CD8-positive, alpha-beta memory T cell (primary cell): ENCODE measurements at regions of chr6 and their contacts with region 1.

Region 1: DNA sequence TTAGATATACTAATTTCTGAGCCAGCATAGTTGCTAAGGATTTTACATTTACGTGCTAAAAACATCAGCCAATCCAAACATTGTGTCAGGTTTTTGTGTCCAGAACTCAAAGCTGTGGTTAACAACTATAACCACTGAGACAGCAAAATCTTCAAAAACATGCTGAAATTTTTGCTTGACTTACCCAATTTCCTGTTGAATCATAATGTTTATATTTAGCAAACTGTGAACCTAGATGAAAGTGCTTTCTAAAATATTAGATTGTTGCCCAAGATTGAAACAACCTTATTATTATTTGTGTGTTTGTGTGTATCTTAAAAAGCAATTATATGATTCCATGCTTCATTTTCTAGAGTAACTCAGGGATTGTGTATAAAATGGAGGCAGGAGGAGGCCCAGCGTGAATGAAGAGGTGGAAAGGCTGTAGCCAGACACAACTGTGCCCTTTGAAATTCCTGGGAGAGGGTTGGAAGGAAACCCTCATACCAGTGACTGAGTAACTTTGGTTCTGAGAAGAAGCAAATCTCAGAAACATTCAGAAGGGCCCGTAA is 48.0 kb downstream of the ARMC2 start:
- DNase-seq: peak in 1 of 5 donors; percentile 71
- H3K4me3 ChIP-seq: peak overlapping the region; percentile 20
- H3K4me3 Mint-ChIP-seq: peak overlapping the region; percentile 25 to 88 (median 83)
- H3K27ac ChIP-seq: peak overlapping the region; percentile 33
- H3K27ac Mint-ChIP-seq: peak overlapping the region; percentile 74 to 99 (median 93)
- H3K4me1 ChIP-seq: peaks cover 41% of the 10 kb centered on the region
- H3K4me1 Mint-ChIP-seq: peaks cover 45 to 71% (median 68%) of the 10 kb centered on the region in 3 donors
- H3K27me3 ChIP-seq: no peaks in the 10 kb centered on the region
- H3K27me3 Mint-ChIP-seq: no peaks in the 10 kb centered on the region

Region 2: GRCh38 chr6:108541838-108542759 is 354.1 kb before region 1 on chr6:
- CTCF ChIA-PET with region 1: interaction called, 20 read pairs
- POLR2A ChIA-PET with region 1: interaction called, 5 read pairs
- DNase-seq: peak; percentile 54 to 80 (median 65)
- H3K4me3 ChIP-seq: no peak overlapping the region
- H3K4me3 Mint-ChIP-seq: peak overlapping the region in 3 of 7 donors; percentile 8 to 32 (median 28)
- H3K27ac ChIP-seq: no peak overlapping the region
- H3K27ac Mint-ChIP-seq: peak overlapping the region in 3 of 8 donors; percentile 24 to 84 (median 33)
- H3K4me1 ChIP-seq: peaks cover 19% of the 10 kb centered on the region
- H3K4me1 Mint-ChIP-seq: peaks cover 20 to 26% (median 22%) of the 10 kb centered on the region in 3 donors
- H3K27me3 ChIP-seq: no peaks in the 10 kb centered on the region
- H3K27me3 Mint-ChIP-seq: peaks cover 0 to 8% of the 10 kb centered on the region in 2 donors

Region 3: GRCh38 chr6:108848116-108848868 is 47.9 kb before region 1 on chr6 and contains the start of gene ARMC2:
- CTCF ChIA-PET with region 1: interaction called, 15 read pairs
- POLR2A ChIA-PET with region 1: interaction called, 5 read pairs
- DNase-seq: peak; percentile 76 to 91 (median 85)
- H3K4me3 ChIP-seq: peak within 1 kb of the TSS; percentile 68
- H3K4me3 Mint-ChIP-seq: peak within 1 kb of the TSS; percentile 83 to 97 (median 89)
- H3K27ac ChIP-seq: peak within 1 kb of the TSS; percentile 65
- H3K27ac Mint-ChIP-seq: peak within 1 kb of the TSS; percentile 89 to 95 (median 92)
- H3K4me1 ChIP-seq: peaks cover 7% of the 10 kb centered on the region
- H3K4me1 Mint-ChIP-seq: peaks cover 25 to 52% (median 44%) of the 10 kb centered on the region in 3 donors
- H3K27me3 ChIP-seq: no peaks in the 10 kb centered on the region
- H3K27me3 Mint-ChIP-seq: peaks cover 0 to 3% of the 10 kb centered on the region in 2 donors
- total RNA-seq, gene ARMC2: 6.2 to 6.7 TPM

Region 4: DNA sequence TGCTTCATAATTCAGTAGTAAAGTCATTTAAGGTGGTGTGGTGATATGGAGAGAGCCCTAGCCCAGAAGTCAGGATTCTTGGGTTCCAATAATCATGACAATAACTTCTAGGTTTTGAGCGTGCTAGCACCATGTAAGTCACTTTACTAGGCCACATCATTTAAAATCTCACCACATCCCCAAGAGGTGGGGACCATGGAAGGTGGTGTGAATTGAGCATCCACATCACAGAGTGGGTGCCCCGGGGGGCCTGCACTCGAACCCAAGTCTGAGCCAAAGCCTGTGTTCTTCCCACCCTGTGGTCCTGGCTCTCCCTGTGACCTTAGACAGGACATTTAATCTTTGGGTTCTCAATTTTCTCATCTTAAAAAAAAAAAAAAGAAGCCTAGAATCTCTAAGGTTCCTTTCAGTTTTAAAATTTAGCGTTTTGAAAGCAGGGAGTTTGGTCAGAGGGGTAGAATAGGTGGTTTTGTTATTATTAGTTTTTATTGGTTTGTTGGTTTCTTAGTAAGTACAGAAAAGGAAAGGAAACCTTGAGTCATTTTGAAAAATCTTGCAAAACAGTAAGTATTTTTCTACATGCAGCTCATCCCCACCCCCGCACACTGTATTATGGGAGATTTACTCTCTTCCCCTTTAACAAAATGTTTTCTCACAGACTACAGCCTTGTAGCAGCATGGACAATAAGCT is 21.6 kb before region 1 on chr6:
- CTCF ChIA-PET with region 1: interaction called, 13 read pairs
- POLR2A ChIA-PET with region 1: interaction called, 4 read pairs
- DNase-seq: peak in 4 of 5 donors; percentile 9 to 68 (median 26)
- H3K4me3 ChIP-seq: peak overlapping the region; percentile 29
- H3K4me3 Mint-ChIP-seq: peak overlapping the region; percentile 54 to 90 (median 72)
- H3K27ac ChIP-seq: peak overlapping the region; percentile 52
- H3K27ac Mint-ChIP-seq: peak overlapping the region; percentile 90 to 97 (median 93)
- H3K4me1 ChIP-seq: peaks cover 46% of the 10 kb centered on the region
- H3K4me1 Mint-ChIP-seq: peaks cover 56 to 75% (median 60%) of the 10 kb centered on the region in 3 donors
- H3K27me3 ChIP-seq: no peaks in the 10 kb centered on the region
- H3K27me3 Mint-ChIP-seq: peaks cover 0 to 2% of the 10 kb centered on the region in 2 donors

Region 5: GRCh38 chr6:108883172-108883571 is 13.0 kb before region 1 on chr6:
- CTCF ChIA-PET with region 1: interaction called, 13 read pairs
- POLR2A ChIA-PET with region 1: no interaction called
- DNase-seq: no peak
- H3K4me3 ChIP-seq: no peak overlapping the region
- H3K4me3 Mint-ChIP-seq: no peak overlapping the region
- H3K27ac ChIP-seq: no peak overlapping the region
- H3K27ac Mint-ChIP-seq: no peak overlapping the region
- H3K4me1 ChIP-seq: no peaks in the 10 kb centered on the region
- H3K4me1 Mint-ChIP-seq: peaks cover 7 to 23% (median 18%) of the 10 kb centered on the region in 3 donors
- H3K27me3 ChIP-seq: no peaks in the 10 kb centered on the region
- H3K27me3 Mint-ChIP-seq: no peaks in the 10 kb centered on the region

Region 6: DNA sequence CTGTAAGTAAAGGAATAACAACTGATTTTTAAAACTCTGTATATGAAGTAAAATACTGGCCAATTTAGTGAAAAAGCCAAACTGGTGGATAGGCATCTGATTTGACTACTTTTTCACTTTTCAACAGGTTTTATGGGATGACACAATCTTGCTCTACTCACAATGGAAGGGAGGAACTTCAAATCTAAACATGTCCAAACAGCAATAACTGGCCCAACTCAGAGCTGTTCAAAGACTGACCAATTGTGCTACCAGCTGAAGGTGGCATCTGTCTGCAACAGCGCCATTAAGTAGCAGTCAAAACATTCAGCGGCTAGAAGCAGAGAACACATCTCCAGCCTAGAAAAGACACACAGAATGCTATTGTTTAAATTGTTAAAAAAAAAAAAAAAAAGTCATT is 153.8 kb after region 1 on chr6:
- CTCF ChIA-PET with region 1: no interaction called
- POLR2A ChIA-PET with region 1: no interaction called
- DNase-seq: no peak
- H3K4me3 ChIP-seq: no peak overlapping the region
- H3K4me3 Mint-ChIP-seq: no peak overlapping the region
- H3K27ac ChIP-seq: no peak overlapping the region
- H3K27ac Mint-ChIP-seq: no peak overlapping the region
- H3K4me1 ChIP-seq: peaks cover 21% of the 10 kb centered on the region
- H3K4me1 Mint-ChIP-seq: peaks cover 46 to 65% (median 48%) of the 10 kb centered on the region in 3 donors
- H3K27me3 ChIP-seq: no peaks in the 10 kb centered on the region
- H3K27me3 Mint-ChIP-seq: no peaks in the 10 kb centered on the region